Right ventricle myocardium inferior (tissue), 1 donor: ENCODE measurements at regions of chr17 and their contacts with region 1.

Region 1: GRCh38 chr17:63993368-63993985 is 4.7 kb upstream of the PRR29 start:
- DNase-seq: no peak
- ATAC-seq: no peak

Region 2: DNA sequence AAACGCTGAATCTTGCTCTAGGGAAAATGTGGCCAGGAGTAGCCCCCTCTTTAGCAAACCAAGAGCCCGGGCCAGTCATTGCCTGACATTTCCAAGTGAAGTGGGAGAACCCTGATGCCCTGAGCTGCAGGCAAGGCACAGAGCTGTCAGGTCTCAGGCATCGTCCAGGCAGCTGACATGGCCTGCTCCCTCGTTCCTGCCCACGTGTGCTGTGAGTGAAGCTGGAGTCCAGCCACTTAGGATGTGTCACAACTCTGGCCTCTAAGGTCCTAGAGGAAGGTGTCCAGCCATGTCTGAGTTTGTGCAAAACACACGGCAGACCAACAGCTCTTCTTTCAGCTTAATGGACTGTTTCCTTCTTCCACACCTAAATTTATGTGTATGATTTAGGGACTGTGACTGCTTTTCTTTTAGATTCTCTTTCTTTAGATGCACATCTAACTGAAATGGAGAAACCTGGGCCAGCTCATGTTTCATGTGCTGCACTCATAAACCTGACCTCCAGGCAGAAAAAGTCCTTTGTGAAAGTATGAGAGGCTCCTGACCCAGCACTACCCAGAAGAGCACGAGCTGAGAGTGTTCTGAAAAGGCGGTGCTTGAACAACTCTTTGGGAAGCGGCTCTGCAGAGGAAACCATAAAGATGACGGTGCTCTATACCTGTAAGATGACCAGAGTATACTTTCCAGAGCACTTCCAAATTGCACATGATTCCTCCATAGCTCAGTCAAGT is 278.8 kb before region 1 on chr17:
- intact Hi-C with region 1: no loop called
- DNase-seq: no peak
- ATAC-seq: peak; percentile 75

Region 3: DNA sequence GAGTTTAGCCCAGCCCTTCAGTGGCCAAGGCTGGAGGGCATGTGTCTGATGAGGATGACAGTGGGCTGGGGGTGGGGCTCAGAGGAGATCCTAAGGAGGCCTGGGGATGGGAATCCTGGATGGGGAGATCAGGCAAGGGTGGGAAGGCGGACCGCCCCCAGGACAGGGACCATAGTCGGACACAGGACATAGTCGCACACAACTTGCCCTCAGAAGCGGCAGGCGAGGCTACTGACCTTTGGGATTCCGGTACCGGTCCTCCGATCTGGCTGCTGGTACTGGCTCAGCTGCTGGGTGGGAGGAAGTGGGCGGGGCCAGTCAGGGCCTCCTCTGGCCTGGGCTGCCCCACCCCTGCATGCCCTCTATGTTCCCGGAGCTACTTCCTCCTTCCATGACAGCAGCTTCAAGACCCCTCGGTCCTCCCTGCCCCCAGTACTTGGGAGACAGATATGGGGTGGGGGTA is 62.3 kb before region 1 on chr17:
- intact Hi-C with region 1: loop called (anchors 5 kb)
- DNase-seq: peak; percentile 87
- ATAC-seq: peak; percentile 77

Region 4: DNA sequence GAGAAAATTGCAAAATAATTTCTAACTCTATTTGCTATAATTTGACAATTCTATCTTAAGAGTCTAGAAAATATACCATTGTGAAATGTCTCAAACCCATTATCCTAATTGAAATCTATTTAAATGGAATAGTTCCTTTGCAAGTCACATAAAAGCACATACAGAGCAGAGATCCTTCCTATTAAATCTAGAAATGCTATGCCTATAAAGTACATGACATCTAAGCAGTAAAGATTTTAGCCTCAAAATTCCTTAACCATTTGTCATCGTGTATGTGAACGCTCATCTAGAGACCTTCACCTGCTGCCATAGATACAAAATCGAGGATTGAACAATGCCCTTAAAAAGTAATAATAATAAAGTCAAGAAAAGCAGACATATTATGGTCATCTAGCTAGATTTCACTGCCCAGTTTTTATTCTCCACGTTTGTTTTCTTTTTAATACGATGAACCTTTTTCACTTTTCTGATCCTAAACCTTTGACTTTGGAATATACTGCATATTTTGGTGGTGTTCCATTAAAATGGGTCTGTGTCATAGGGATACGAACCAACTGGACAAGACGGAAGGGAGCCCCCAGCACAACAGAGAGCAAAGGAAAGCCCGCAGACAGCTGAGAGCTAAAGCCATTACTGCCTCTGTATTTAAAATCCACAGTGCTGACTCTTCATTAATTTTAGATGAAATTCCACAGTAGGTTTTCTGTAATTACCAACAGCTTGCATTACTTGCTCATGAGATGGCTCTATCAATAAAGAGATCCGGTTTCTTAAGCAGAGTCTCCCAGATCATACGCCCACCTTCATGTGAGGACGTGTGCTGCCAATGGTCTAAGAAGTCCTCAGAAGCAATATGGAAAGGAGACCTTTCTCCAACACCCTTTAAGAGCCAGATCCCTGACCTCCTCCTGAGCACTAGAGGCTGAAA is 252.0 kb after region 1 on chr17:
- intact Hi-C with region 1: no loop called
- DNase-seq: no peak
- ATAC-seq: no peak